Activated CD4-positive, alpha-beta T cell treated with anti-CD3 and anti-CD28 coated beads, Interleukin-2, amount 10 ng/mL, durations not matched to agents 24 days and 14 days (primary cell): ENCODE measurements at regions of chr11 and their contacts with region 1.

Region 1: GRCh38 chr11:128039140-128040021 is 548.0 kb downstream of the ETS1 start:
- DNase-seq: peak; percentile 94
- H3K4me3 Mint-ChIP-seq: peak overlapping the region; percentile 73
- H3K27ac Mint-ChIP-seq: peak overlapping the region; percentile 94
- H3K4me1 Mint-ChIP-seq: peaks cover 41% of the 10 kb centered on the region
- H3K27me3 Mint-ChIP-seq: no peaks in the 10 kb centered on the region

Region 2: DNA sequence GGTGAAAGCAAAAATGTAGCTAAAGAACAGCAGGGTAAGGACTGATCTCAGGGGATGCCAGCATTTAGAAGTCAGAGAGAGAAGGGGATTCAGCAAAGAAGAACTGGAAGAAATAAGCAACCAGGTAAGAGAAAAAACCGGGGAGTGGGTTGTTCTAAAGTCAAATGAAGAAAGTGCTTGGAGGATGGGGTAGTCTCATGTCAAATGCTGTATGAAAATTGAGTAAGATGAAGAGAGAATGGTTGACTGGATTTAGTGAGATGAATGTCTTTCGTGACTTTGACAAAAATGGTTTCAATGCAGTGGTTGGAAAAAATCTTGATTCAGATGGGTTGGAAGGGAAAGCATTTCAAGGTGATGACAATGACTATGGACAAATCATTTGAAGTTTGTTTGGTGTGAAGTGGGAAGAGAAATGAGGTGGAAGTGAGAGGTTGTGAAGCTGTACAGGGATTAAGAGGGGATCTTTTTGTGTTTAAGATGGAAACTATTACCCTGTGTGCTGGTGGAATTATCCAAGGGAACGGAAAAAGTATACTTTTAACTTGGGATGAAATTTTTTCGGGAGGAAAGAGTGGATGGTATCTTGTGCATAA is 64.0 kb after region 1 on chr11:
- intact Hi-C with region 1: loop called (anchors 5 kb)
- DNase-seq: no peak
- H3K4me3 Mint-ChIP-seq: no peak overlapping the region
- H3K27ac Mint-ChIP-seq: no peak overlapping the region
- H3K4me1 Mint-ChIP-seq: peaks cover 2% of the 10 kb centered on the region
- H3K27me3 Mint-ChIP-seq: peaks cover 3% of the 10 kb centered on the region

Region 3: DNA sequence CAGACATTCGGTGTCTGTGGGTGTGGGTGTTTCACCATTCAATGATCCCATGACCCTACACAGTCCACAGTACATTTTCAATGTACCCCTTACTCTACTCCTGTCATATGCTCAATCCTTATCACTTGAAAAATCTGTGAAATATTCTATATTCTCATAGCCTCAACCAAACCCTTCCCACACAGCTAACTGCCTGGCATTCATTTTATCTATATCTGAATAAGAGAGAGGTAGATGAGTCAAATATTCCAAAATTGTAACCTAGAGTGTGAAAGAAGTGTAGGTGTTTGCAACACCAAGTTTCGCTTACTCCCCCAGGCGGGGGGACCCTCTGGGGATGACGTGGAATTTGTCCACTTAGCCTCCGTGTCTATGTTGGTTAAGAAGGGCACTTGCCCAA is 193.2 kb after region 1 on chr11:
- intact Hi-C with region 1: loop called (anchors 2 kb)
- DNase-seq: peak; percentile 68
- H3K4me3 Mint-ChIP-seq: peak overlapping the region; percentile 55
- H3K27ac Mint-ChIP-seq: peak overlapping the region; percentile 90
- H3K4me1 Mint-ChIP-seq: peaks cover 41% of the 10 kb centered on the region
- H3K27me3 Mint-ChIP-seq: no peaks in the 10 kb centered on the region

Region 4: GRCh38 chr11:128279866-128280265 is 240.5 kb after region 1 on chr11:
- intact Hi-C with region 1: no loop called
- DNase-seq: no peak
- H3K4me3 Mint-ChIP-seq: no peak overlapping the region
- H3K27ac Mint-ChIP-seq: no peak overlapping the region
- H3K4me1 Mint-ChIP-seq: peaks cover 4% of the 10 kb centered on the region
- H3K27me3 Mint-ChIP-seq: peaks cover 19% of the 10 kb centered on the region

Region 5: DNA sequence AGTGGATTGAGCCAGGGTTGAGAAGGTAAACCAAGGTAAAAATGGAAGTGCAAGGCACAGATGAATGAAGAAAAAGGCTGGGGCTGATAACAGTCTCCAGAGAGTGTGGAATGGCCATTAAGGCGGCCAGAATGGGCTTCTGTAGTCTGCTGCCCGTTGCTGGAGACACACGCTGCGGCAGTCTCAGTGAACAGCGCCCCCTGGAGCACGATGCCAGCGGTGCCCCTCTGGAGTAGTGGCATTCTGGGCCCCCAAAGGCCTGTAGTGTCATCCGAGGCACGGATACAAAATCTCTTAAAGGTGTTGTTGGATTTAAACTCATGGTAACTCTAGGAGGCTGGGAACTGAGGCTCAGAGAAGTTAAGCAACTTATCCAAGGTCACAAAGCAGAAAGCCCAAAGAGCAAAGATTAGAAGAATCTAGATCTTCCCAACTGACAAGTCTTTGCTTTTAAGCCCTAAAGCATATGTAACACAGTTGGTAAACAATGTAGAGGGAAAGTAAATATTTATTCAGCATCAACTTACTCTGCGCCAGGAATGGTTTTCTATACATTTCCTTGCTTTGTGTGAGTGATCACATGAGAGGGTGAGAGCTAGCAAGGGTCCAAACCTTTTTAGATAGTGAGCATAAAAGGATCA is 809.6 kb after region 1 on chr11:
- intact Hi-C with region 1: loop called (anchors 5 kb)
- DNase-seq: peak; percentile 87
- H3K4me3 Mint-ChIP-seq: no peak overlapping the region
- H3K27ac Mint-ChIP-seq: no peak overlapping the region
- H3K4me1 Mint-ChIP-seq: peaks cover 16% of the 10 kb centered on the region
- H3K27me3 Mint-ChIP-seq: no peaks in the 10 kb centered on the region